ENCODE measurements at regions of chr11 and their contacts with region 1.

Region 1: DNA sequence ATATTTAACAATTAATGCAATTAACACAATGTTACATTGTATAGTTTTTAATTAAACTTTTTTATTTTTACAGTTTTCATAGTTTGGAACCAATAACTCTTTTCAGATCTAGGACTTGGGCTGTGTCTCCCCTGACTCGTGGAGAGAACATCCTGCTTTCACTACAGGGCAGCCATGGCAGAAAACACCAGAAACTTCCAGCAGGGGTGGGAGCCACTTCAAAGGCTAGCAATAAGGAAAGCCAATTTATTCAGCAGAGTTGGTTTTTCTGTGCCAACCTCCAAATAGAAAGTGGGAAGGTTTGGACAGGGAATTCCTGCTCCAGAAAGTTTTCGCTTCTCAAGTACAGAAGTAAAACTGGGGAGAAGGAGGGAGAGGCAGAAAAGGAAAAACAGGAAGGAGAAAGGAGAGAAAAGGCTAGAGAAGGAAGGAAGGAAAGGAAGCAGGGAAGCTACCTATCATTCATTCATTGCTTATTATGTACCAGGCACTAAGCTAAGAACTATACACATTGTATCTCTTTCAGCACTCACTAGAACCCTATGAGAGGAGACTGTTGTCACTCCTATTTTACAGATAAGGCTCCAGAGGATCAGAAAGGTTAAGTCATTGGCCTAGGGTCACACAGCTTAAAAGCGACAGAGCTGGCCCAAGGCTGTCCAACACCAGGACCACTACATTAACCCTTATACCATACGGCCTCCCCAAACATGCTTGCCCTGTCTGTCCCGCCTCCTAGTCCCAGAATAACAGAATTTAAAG is 54.8 kb upstream of the CREB3L1 start:
- DNase-seq: no peak
- ATAC-seq: no peak
- H3K4me3 ChIP-seq: no peak overlapping the region
- H3K27ac ChIP-seq: no peak overlapping the region
- H3K4me1 ChIP-seq: no peaks in the 10 kb centered on the region
- H3K27me3 ChIP-seq: peaks cover 0 to 5% (median 0%) of the 10 kb centered on the region in 7 donors
- CTCF ChIP-seq: no peak

Region 2: DNA sequence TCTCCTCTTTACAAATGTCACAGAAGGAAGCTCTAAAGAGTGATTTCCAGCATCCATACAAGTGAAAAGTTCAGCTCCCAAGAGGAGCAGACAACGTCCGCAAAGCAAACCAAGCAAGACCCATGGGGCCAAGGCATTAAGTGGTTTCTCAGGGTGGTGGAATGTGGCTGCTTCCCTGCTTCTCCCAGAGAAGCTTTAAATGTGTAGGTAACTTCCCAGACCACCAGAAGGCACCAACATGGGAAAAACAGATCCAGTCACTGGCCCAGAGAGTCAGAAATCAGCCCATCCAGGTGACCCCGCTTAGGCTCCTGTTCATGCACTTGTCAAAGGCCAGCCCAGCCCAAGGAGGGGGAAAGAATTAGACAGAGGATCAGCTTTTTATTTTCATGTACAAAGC is 88.1 kb before region 1 on chr11:
- intact Hi-C with region 1: loop called in 2 of 10 experiments (anchors 10 kb)
- DNase-seq: no peak
- ATAC-seq: no peak
- H3K4me3 ChIP-seq: no peak overlapping the region
- H3K27ac ChIP-seq: no peak overlapping the region
- H3K4me1 ChIP-seq: peaks cover 0 to 11% (median 0%) of the 10 kb centered on the region in 9 donors
- H3K27me3 ChIP-seq: peaks cover 0 to 8% (median 0%) of the 10 kb centered on the region in 7 donors
- CTCF ChIP-seq: no peak